ENCODE measurements at regions of chr21 and their contacts with region 1.

Region 1: GRCh38 chr21:45820171-45821091 is 161.1 kb upstream of the COL6A1 start:
- DNase-seq: peak; percentile 86
- ATAC-seq: peak; percentile 93

Region 2: GRCh38 chr21:45460611-45461368 is 359.6 kb before region 1 on chr21:
- intact Hi-C with region 1: loop called (anchors 10 kb)
- DNase-seq: no peak
- ATAC-seq: no peak

Region 3: DNA sequence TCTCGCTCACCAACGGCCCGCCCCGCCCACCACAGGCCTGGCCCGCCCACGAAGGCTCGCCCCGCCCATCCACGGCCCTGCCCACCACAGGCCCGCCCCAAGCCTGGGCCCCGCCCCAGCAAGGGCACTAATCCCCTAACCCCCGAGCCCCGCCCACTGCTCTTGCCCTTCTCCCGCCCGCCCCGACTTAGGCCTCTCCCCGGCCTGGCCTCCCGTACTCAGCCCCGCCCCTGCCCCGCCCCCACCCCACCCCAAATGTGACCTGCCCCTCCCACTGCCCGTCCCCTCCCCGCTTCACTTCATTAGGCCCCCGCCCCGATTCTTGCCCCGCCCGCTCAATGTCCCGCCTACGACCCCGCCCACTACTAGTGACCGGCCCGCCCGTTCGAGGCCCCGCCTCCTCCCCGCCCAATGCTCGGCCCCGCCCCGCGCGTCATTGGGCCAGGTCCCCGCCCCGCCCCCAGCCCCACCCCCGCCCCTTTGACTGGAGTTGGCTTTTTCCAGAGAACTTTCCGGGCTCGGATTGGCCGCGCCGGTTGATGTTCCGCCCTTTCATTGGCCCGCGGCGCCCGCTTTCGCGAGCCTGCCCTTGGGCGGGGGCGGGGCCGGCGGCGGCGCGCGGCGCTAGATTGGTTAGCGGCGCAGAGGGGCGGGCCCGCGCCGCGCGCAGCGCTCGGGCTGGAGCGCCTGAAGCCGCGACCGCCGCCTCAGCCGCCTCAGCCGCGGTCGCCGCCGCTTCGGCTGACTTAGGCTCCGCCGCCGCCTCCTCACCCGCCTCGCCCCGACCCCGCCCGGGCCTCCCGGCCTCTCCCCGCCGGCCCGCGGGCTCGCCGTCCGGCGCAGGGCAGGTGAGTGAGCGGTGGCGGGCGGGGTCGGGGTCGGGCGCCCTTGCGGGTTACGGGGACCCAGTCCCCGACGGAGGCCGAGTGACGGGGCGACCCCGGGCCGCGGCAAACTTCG is 177.1 kb before region 1 on chr21 and contains the start of gene PCBP3:
- intact Hi-C with region 1: no loop called
- DNase-seq: peak; percentile 97
- ATAC-seq: peak; percentile 92
- total RNA-seq, gene PCBP3: 2.0 TPM

Region 4: DNA sequence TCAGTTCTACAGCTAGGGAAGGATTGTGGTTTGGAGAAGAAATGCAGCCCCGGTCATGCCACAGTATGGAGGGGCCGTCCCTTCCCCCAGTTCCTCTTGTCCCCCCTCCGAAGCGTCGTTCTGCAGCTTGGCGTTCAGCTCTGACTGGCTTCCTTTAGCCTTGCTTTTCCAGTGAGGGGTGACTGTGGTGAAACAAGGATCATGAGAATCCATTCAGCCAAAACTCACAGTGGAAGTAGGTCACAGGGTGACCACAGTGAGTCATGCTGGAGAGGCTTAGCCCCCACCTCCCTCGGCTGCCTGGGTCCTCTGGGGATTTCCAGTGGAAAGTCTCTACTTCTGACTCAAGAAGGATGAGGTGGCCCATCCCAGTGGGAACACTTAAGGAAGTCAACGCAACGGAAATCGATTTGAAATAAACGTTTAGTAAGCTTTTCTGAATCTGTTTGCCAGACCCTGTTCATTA is 240.2 kb after region 1 on chr21:
- intact Hi-C with region 1: no loop called
- DNase-seq: peak; percentile 71
- ATAC-seq: peak; percentile 46

Measured in Right ventricle myocardium superior (tissue), 1 donor.